Dorsolateral prefrontal cortex (tissue), 120 donors: ENCODE measurements at regions of chr15 and their contacts with region 1.

Region 1: GRCh38 chr15:92077353-92078085 is 224.0 kb downstream of the SLCO3A1 start:
- DNase-seq: peak; percentile 62 to 85 (median 79)
- H3K4me3 ChIP-seq: no peak overlapping the region
- H3K27ac ChIP-seq: peak overlapping the region in 13 of 59 donors; percentile 4 to 54 (median 44)
- H3K27me3 ChIP-seq: no peaks in the 10 kb centered on the region
- CTCF ChIP-seq: peak in 55 of 56 donors; percentile 58 to 90 (median 77)

Region 2: GRCh38 chr15:91302588-91303439 is 774.7 kb before region 1 on chr15:
- intact Hi-C with region 1: loop called (anchors 2 to 5 kb)
- DNase-seq: peak in 4 of 10 donors; percentile 21 to 46 (median 34)
- H3K4me3 ChIP-seq: peak overlapping the region in 13 of 59 donors; percentile 1 to 43 (median 20)
- H3K27ac ChIP-seq: no peak overlapping the region
- H3K27me3 ChIP-seq: peaks cover 0 to 10% (median 0%) of the 10 kb centered on the region in 45 donors
- CTCF ChIP-seq: peak; percentile 51 to 90 (median 78)

Region 3: DNA sequence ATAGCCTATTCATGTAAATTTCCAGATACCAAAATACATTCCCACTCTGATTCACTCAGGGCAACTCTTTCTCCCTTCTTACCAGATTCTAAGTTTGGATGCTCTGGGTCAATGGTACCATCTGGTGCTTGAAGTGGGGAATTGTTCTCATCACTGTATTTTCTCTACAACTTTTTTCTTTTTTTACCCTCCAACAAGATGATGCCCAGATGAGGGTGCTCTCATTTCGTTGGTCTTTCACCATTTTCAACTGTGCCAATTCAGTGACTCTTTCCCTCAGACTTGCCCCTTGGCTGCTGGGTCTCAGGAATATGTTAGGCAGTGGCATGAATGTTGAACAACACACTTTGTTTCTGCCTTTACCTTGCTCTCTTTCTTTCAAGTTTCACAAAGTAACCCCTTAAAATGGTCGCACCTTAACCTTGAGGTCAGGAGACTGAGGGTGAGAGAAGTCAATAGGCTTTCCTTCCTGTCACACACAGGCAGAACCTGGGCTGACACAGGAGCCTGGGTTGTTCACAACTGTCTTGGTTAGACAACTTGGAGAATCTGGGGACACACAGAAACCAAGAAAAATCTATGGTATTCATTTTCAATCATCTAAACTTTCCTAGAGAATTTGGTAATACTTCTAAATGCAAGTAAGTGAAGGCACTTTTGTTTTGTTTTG is 554.7 kb before region 1 on chr15:
- intact Hi-C with region 1: loop called in 1 of 2 experiments (anchors 5 kb)
- DNase-seq: peak in 1 of 10 donors; percentile 26
- H3K4me3 ChIP-seq: no peak overlapping the region
- H3K27ac ChIP-seq: peak overlapping the region in 46 of 59 donors; percentile 3 to 85 (median 56)
- H3K27me3 ChIP-seq: no peaks in the 10 kb centered on the region
- CTCF ChIP-seq: peak in 55 of 56 donors; percentile 47 to 85 (median 69)

Region 4: DNA sequence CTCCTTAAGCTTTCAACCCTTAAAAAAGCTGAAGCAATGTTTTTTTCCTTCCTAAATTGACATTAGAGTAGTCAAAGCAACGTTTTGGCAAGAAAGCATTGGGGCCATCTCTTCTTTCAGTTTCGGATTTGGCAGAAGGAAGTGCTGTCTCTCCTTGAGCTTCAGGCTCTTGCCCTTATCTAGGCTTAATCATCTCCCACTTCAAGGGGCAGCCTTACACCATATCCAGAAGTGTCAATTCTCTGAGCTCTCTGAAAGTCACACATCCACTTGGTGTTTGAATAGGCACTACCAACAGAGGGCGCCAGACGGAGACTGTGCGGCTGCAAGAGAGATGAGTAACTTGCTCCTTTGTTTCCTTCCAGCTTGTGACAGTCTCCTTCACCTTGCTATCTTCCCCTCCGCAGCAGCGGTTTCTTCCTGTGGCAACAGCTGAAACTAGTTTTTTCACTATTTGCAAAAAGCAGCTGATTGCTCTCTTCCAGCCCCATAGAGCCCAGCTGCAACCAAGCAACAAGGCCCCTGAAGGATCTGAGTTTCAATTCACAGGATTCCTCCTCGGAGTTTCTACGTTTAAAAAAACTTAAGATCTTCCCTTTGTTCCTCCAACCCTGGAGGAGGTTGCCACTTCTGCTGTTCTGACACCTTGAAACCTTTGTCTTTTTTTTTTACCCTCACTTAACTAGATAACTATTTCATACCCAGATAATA is 371.0 kb before region 1 on chr15:
- intact Hi-C with region 1: loop called in 1 of 2 experiments (anchors 5 kb)
- DNase-seq: peak; percentile 50 to 88 (median 78)
- H3K4me3 ChIP-seq: peak overlapping the region in 3 of 59 donors; percentile 5 to 18 (median 10)
- H3K27ac ChIP-seq: peak overlapping the region in 49 of 59 donors; percentile 1 to 78 (median 60)
- H3K27me3 ChIP-seq: no peaks in the 10 kb centered on the region
- CTCF ChIP-seq: peak; percentile 62 to 95 (median 89)

Region 5: DNA sequence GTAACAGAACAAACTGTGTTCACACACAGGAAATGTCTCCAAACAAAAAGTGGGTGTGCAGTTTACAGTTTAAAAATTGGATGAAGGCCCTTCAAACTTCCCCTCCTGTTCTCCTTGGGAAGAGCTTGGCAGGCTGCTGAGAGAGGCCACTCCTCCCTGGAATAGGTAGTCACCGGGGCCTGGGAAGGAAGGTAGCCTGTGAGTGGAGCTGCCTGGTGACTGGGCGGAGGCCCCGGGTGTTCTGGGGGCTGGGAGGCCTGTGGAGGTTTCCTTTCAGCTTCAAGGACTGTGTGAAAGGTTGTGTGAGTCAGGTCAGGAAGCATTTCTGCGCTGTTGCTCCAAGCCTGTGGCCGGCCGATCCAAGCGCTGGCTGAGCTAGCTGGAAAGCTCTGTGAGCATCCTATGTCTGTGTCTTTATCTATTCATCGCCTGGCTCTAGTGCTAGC is 209.9 kb before region 1 on chr15:
- intact Hi-C with region 1: loop called in 1 of 2 experiments (anchors 5 kb)
- DNase-seq: peak in 3 of 10 donors; percentile 27 to 50 (median 36)
- H3K4me3 ChIP-seq: peak overlapping the region in 10 of 59 donors; percentile 2 to 34 (median 19)
- H3K27ac ChIP-seq: peak overlapping the region in 57 of 59 donors; percentile 13 to 91 (median 81)
- H3K27me3 ChIP-seq: no peaks in the 10 kb centered on the region
- CTCF ChIP-seq: peak in 2 of 56 donors; percentile 9 to 10

Region 6: GRCh38 chr15:91947683-91948608 is 129.6 kb before region 1 on chr15:
- intact Hi-C with region 1: loop called in 1 of 2 experiments (anchors 5 kb)
- DNase-seq: peak in 1 of 10 donors; percentile 81
- H3K4me3 ChIP-seq: no peak overlapping the region
- H3K27ac ChIP-seq: peak overlapping the region in 43 of 59 donors; percentile 0 to 81 (median 41)
- H3K27me3 ChIP-seq: no peaks in the 10 kb centered on the region
- CTCF ChIP-seq: no peak

Region 7: GRCh38 chr15:91965501-91966184 is 111.9 kb before region 1 on chr15:
- intact Hi-C with region 1: loop called (anchors 5 kb)
- DNase-seq: peak in 5 of 10 donors; percentile 39 to 70 (median 39)
- H3K4me3 ChIP-seq: peak overlapping the region in 12 of 59 donors; percentile 3 to 42 (median 18)
- H3K27ac ChIP-seq: peak overlapping the region in 58 of 59 donors; percentile 29 to 93 (median 82)
- H3K27me3 ChIP-seq: no peaks in the 10 kb centered on the region
- CTCF ChIP-seq: peak in 1 of 56 donors; percentile 10